CD4-positive, alpha-beta T cell (primary cell): ENCODE measurements at regions of chr3 and their contacts with region 1.

Region 1: DNA sequence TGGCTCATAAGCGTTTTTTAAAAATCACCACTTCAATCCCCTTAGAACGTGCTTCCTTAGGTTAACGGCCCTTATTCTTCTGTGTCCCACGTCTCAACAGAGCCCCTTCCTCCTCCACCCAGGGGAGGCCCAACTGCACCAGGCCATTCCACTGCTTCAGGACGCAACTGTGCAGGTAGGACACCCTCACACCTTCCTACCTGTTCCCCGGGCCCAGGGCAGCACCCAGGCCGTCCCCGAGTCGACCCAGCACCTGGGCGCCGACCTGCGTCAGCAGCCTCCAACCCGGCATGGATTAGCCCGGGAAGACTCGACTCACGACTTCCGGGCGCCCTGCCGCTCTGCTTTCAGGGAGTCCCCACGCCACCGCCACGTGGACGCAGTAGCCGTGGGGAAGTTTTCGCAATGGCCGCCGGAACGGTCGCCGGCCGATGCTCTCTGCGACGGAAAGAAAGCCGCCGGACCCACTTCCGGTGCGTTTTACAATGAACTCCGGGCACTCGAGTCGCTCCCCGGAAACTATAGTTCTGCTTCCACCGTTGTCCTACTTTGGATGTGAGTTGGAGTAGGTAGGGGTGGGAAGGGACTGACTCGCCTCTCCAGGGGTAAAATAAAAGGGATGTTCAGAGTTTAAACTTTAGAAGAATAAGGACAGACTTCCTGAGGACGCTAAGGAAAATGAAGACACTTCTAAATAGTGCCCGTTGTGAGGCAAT is at the start of gene MRPL3:
- DNase-seq: peak; percentile 72 to 93 (median 78)
- ATAC-seq: peak; percentile 89
- H3K4me3 ChIP-seq: peak within 1 kb of the TSS; percentile 71
- H3K4me3 Mint-ChIP-seq: peak within 1 kb of the TSS; percentile 98
- H3K27ac ChIP-seq: peak within 1 kb of the TSS; percentile 66 to 76
- H3K27ac Mint-ChIP-seq: peak within 1 kb of the TSS; percentile 93
- H3K4me1 ChIP-seq: peaks cover 16% of the 10 kb centered on the region
- H3K4me1 Mint-ChIP-seq: peaks cover 54% of the 10 kb centered on the region
- H3K27me3 ChIP-seq: no peaks in the 10 kb centered on the region
- H3K27me3 Mint-ChIP-seq: no peaks in the 10 kb centered on the region
- CTCF ChIP-seq: no peak
- total RNA-seq, gene MRPL3: 36.0 to 37.6 TPM

Region 2: GRCh38 chr3:130992344-130992743 is 510.3 kb before region 1 on chr3:
- CTCF ChIA-PET with region 1: no interaction called
- POLR2A ChIA-PET with region 1: no interaction called
- intact Hi-C with region 1: no loop called
- DNase-seq: no peak
- ATAC-seq: no peak
- H3K4me3 ChIP-seq: no peak overlapping the region
- H3K4me3 Mint-ChIP-seq: no peak overlapping the region
- H3K27ac ChIP-seq: no peak overlapping the region
- H3K27ac Mint-ChIP-seq: no peak overlapping the region
- H3K4me1 ChIP-seq: no peaks in the 10 kb centered on the region
- H3K4me1 Mint-ChIP-seq: no peaks in the 10 kb centered on the region
- H3K27me3 ChIP-seq: no peaks in the 10 kb centered on the region
- H3K27me3 Mint-ChIP-seq: no peaks in the 10 kb centered on the region
- CTCF ChIP-seq: no peak

Region 3: GRCh38 chr3:131026321-131027178 is 476.1 kb before region 1 on chr3 and contains the starts of genes ASTE1 and NEK11:
- CTCF ChIA-PET with region 1: no interaction called
- POLR2A ChIA-PET with region 1: interaction called, 5 read pairs
- intact Hi-C with region 1: loop called (anchors 2 to 10 kb)
- DNase-seq: peak; percentile 85 to 96 (median 90)
- ATAC-seq: peak; percentile 97
- H3K4me3 ChIP-seq: peak within 1 kb of the TSS; percentile 66
- H3K4me3 Mint-ChIP-seq: peak within 1 kb of the TSS; percentile 93
- H3K27ac ChIP-seq: peak within 1 kb of the TSS; percentile 84 to 89
- H3K27ac Mint-ChIP-seq: peak within 1 kb of the TSS; percentile 94
- H3K4me1 ChIP-seq: peaks cover 30% of the 10 kb centered on the region
- H3K4me1 Mint-ChIP-seq: peaks cover 52% of the 10 kb centered on the region
- H3K27me3 ChIP-seq: no peaks in the 10 kb centered on the region
- H3K27me3 Mint-ChIP-seq: no peaks in the 10 kb centered on the region
- CTCF ChIP-seq: no peak
- total RNA-seq, gene ASTE1: 25.6 to 26.6 TPM
- total RNA-seq, gene NEK11: 1.6 to 4.2 TPM

Region 4: DNA sequence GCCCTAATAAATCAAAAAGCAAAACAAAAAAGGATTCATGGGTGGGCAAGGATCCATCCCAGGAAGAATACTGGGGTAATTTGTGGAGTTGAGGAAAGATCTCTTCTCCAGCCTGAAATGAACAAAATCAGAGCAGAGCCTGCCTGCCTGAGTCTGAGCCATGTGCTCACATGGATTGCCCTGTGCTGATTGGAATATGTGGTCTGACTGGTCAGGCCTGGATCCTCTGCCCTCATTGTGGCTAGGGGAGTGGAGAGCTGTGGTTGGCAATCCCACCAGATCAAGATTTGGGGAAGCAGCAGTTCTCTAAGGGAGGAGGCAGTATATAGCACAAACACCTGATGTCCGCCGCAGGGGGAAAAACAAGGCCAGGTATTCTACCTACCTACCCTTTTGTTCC is 127.9 kb before region 1 on chr3:
- CTCF ChIA-PET with region 1: no interaction called
- POLR2A ChIA-PET with region 1: no interaction called
- intact Hi-C with region 1: no loop called
- DNase-seq: no peak
- ATAC-seq: no peak
- H3K4me3 ChIP-seq: no peak overlapping the region
- H3K4me3 Mint-ChIP-seq: no peak overlapping the region
- H3K27ac ChIP-seq: no peak overlapping the region
- H3K27ac Mint-ChIP-seq: no peak overlapping the region
- H3K4me1 ChIP-seq: peaks cover 7% of the 10 kb centered on the region
- H3K4me1 Mint-ChIP-seq: no peaks in the 10 kb centered on the region
- H3K27me3 ChIP-seq: no peaks in the 10 kb centered on the region
- H3K27me3 Mint-ChIP-seq: no peaks in the 10 kb centered on the region
- CTCF ChIP-seq: no peak

Region 5: DNA sequence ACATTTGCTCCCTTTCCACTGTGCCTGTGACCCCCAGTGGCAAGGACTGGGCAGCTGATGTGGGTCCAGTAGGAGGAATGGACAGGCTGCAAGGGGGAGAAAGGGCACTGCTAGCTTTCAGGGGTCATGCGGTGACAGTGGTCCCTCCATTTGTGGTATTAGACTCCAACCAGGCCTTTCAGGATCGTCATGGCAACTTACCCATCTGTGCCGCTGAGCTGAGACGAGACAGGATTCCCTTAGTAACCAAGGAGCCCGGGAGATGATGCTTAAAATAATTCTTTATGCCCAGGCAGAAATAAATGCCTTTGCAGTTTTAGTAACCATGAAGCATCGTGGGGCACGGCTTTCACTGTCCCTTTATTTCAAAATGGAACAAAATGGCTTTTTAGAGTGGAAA is 16.0 kb after region 1 on chr3:
- CTCF ChIA-PET with region 1: no interaction called
- POLR2A ChIA-PET with region 1: no interaction called
- intact Hi-C with region 1: no loop called
- DNase-seq: no peak
- ATAC-seq: no peak
- H3K4me3 ChIP-seq: no peak overlapping the region
- H3K4me3 Mint-ChIP-seq: no peak overlapping the region
- H3K27ac ChIP-seq: no peak overlapping the region
- H3K27ac Mint-ChIP-seq: no peak overlapping the region
- H3K4me1 ChIP-seq: no peaks in the 10 kb centered on the region
- H3K4me1 Mint-ChIP-seq: no peaks in the 10 kb centered on the region
- H3K27me3 ChIP-seq: no peaks in the 10 kb centered on the region
- H3K27me3 Mint-ChIP-seq: peaks cover 8% of the 10 kb centered on the region
- CTCF ChIP-seq: no peak

Region 6: GRCh38 chr3:132090921-132091320 is 588.2 kb after region 1 on chr3:
- CTCF ChIA-PET with region 1: no interaction called
- POLR2A ChIA-PET with region 1: no interaction called
- intact Hi-C with region 1: no loop called
- DNase-seq: no peak
- ATAC-seq: no peak
- H3K4me3 ChIP-seq: no peak overlapping the region
- H3K4me3 Mint-ChIP-seq: no peak overlapping the region
- H3K27ac ChIP-seq: no peak overlapping the region
- H3K27ac Mint-ChIP-seq: no peak overlapping the region
- H3K4me1 ChIP-seq: no peaks in the 10 kb centered on the region
- H3K4me1 Mint-ChIP-seq: no peaks in the 10 kb centered on the region
- H3K27me3 ChIP-seq: no peaks in the 10 kb centered on the region
- H3K27me3 Mint-ChIP-seq: peaks cover 11% of the 10 kb centered on the region
- CTCF ChIP-seq: no peak